Heart left ventricle (tissue), 16 donors: ENCODE measurements at regions of chrX and their contacts with region 1.

Region 1: GRCh38 chrX:50643525-50644137 is 170.4 kb downstream of the SHROOM4 start:
- DNase-seq: peak in 4 of 5 donors; percentile 47 to 66 (median 56)
- ATAC-seq: peak; percentile 72 to 88 (median 78)
- H3K4me3 ChIP-seq: peak overlapping the region in 11 of 12 donors; percentile 18 to 54 (median 44)
- H3K27ac ChIP-seq: peak overlapping the region; percentile 33 to 76 (median 58)
- H3K4me1 ChIP-seq: peaks cover 0 to 23% (median 10%) of the 10 kb centered on the region in 12 donors
- H3K27me3 ChIP-seq: no peaks in the 10 kb centered on the region
- CTCF ChIP-seq: no peak
- POLR2A ChIP-seq: no peak

Region 2: GRCh38 chrX:50680990-50681389 is 37.4 kb after region 1 on chrX:
- intact Hi-C with region 1: loop called in 1 of 10 experiments (anchors 5 kb)
- DNase-seq: no peak
- ATAC-seq: no peak
- H3K4me3 ChIP-seq: no peak overlapping the region
- H3K27ac ChIP-seq: no peak overlapping the region
- H3K4me1 ChIP-seq: peaks cover 0 to 6% (median 0%) of the 10 kb centered on the region in 12 donors
- H3K27me3 ChIP-seq: peaks cover 0 to 31% (median 0%) of the 10 kb centered on the region in 9 donors
- CTCF ChIP-seq: peak in 11 of 12 donors; percentile 22 to 58 (median 42)
- POLR2A ChIP-seq: no peak

Region 3: GRCh38 chrX:50770702-50771101 is 127.1 kb after region 1 on chrX:
- intact Hi-C with region 1: no loop called
- DNase-seq: peak in 4 of 5 donors; percentile 8 to 28 (median 20)
- ATAC-seq: peak in 3 of 4 donors; percentile 33 to 46 (median 39)
- H3K4me3 ChIP-seq: no peak overlapping the region
- H3K27ac ChIP-seq: peak overlapping the region in 2 of 12 donors; percentile 4 to 9
- H3K4me1 ChIP-seq: peaks cover 0 to 24% (median 3%) of the 10 kb centered on the region in 12 donors
- H3K27me3 ChIP-seq: peaks cover 0 to 9% (median 0%) of the 10 kb centered on the region in 9 donors
- CTCF ChIP-seq: no peak
- POLR2A ChIP-seq: no peak